OCI-LY7 (cell line): ENCODE measurements at regions of chr7 and their contacts with region 1.

Region 1: GRCh38 chr7:50711257-50712175 is 71.2 kb downstream of the GRB10 start:
- DNase-seq: no peak
- H3K4me3 ChIP-seq: no peak overlapping the region
- H3K27ac ChIP-seq: no peak overlapping the region
- H3K4me1 ChIP-seq: no peaks in the 10 kb centered on the region
- CTCF ChIP-seq: no peak

Region 2: DNA sequence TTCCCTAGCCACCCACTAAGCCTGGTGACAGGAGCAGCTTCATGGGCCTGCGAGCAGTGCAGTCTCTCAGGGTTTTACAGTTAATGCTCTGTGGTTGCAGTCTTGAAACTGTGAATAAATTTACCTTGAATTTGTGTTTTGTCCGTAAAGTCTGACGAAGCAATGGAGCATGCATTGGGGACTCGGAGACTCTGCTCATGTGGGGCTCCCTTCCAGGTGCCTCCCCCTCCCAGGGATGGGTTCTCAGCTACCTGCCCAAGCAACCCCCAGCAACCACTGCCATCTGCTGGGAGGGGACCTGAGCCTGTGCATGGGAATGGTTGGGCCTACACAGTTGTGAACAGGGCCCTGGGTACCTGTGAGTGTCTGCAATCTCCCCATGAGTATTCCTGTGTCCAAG is 443.3 kb before region 1 on chr7:
- CTCF ChIA-PET with region 1: no interaction called
- POLR2A ChIA-PET with region 1: no interaction called
- intact Hi-C with region 1: no loop called
- DNase-seq: peak; percentile 56
- H3K4me3 ChIP-seq: peak overlapping the region; percentile 22
- H3K27ac ChIP-seq: peak overlapping the region; percentile 85
- H3K4me1 ChIP-seq: peaks cover 100% of the 10 kb centered on the region
- CTCF ChIP-seq: peak; percentile 70

Region 3: GRCh38 chr7:50771199-50772002 is 59.9 kb after region 1 on chr7:
- CTCF ChIA-PET with region 1: no interaction called
- POLR2A ChIA-PET with region 1: no interaction called
- intact Hi-C with region 1: loop called (anchors 10 kb)
- DNase-seq: no peak
- H3K4me3 ChIP-seq: no peak overlapping the region
- H3K27ac ChIP-seq: no peak overlapping the region
- H3K4me1 ChIP-seq: no peaks in the 10 kb centered on the region
- CTCF ChIP-seq: no peak